H1 (cell line): ENCODE measurements at regions of chr5 and their contacts with region 1.

Region 1: DNA sequence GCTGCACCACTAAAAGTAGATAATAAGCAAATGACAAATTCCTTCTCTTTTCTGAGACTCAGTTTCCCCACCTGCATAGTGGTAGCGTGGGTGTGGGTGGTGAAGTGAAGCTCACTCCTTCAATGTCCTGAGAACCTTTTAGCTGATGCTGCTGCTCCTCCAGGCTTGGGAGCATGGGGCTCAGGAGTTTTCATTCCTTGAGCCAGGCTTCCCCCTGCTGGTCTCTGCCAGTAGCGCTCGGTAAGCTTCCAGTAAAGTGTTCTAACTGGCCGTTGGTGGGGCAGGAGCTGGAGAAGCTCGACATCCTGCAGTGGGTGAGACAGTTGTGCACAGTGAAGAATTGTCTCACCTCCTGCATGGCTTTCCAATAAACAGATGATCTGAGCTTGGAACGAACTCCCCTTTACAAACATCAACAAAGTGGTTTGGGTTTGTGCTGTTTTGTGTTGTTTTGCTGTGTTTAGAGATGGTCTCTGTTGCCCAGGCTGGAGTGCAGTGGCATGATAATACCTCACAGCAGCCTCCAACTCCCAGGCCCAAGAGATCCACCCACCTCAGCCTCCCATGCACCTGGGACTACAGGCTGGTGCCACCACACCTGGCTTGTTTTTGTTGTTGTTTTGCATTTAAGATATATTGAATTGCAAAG is 34.6 kb downstream of the SPARC start:
- DNase-seq: peak; percentile 60 to 87
- H3K4me3 ChIP-seq: no peak overlapping the region
- H3K27ac ChIP-seq: no peak overlapping the region
- H3K4me1 ChIP-seq: no peaks in the 10 kb centered on the region; a peak in 1 of 7 replicates
- H3K27me3 ChIP-seq: no peaks in the 10 kb centered on the region
- CTCF ChIP-seq: peak; percentile 93 to 98 (median 97)
- EP300 ChIP-seq: no peak
- POLR2A ChIP-seq: no peak
- RAD21 ChIP-seq: peak; percentile 99 to 100

Region 2: GRCh38 chr5:151430731-151431130 is 221.4 kb before region 1 on chr5:
- CTCF ChIA-PET with region 1: no interaction called
- POLR2A ChIA-PET with region 1: no interaction called
- DNase-seq: no peak
- H3K4me3 ChIP-seq: no peak overlapping the region
- H3K27ac ChIP-seq: no peak overlapping the region
- H3K4me1 ChIP-seq: peaks cover 0 to 3% (median 0%) of the 10 kb centered on the region in 4 experiments; a peak in 2 of 7 replicates
- H3K27me3 ChIP-seq: no peaks in the 10 kb centered on the region
- CTCF ChIP-seq: no peak
- EP300 ChIP-seq: no peak
- POLR2A ChIP-seq: no peak
- RAD21 ChIP-seq: no peak

Region 3: GRCh38 chr5:151480384-151481293 is 171.5 kb before region 1 on chr5:
- CTCF ChIA-PET with region 1: interaction called, 12 read pairs
- POLR2A ChIA-PET with region 1: no interaction called
- DNase-seq: no peak
- H3K4me3 ChIP-seq: no peak overlapping the region
- H3K27ac ChIP-seq: no peak overlapping the region
- H3K4me1 ChIP-seq: peaks cover 0 to 18% (median 11%) of the 10 kb centered on the region in 4 experiments; a peak in 2 of 7 replicates
- H3K27me3 ChIP-seq: no peaks in the 10 kb centered on the region
- CTCF ChIP-seq: no peak
- EP300 ChIP-seq: no peak
- POLR2A ChIP-seq: no peak
- RAD21 ChIP-seq: no peak

Region 4: DNA sequence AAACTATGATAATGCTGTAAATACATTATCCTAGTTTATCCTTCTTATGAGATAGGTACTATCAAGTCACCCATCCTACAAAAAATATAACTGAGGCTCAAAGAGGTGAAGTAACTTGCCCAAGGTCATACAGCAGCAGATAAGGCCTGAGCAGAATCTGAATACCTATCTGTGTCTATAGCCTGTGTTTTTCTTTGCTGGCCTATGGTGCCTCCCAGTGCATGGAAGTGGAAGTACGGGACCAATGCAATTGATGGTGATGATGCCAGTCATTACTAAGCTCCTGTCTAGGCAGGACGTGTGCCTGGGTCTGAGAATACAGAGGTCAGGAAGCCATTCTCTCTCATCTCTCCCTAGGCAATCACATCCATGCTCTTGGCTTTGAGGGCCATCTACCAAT is 128.8 kb before region 1 on chr5:
- CTCF ChIA-PET with region 1: interaction called, 201 read pairs
- POLR2A ChIA-PET with region 1: no interaction called
- DNase-seq: peak; percentile 15 to 69
- H3K4me3 ChIP-seq: no peak overlapping the region
- H3K27ac ChIP-seq: no peak overlapping the region
- H3K4me1 ChIP-seq: no peaks in the 10 kb centered on the region
- H3K27me3 ChIP-seq: no peaks in the 10 kb centered on the region
- CTCF ChIP-seq: peak; percentile 62 to 94 (median 89)
- EP300 ChIP-seq: no peak
- POLR2A ChIP-seq: no peak
- RAD21 ChIP-seq: peak; percentile 95 to 97

Region 5: GRCh38 chr5:151562019-151562707 is 90.0 kb before region 1 on chr5:
- CTCF ChIA-PET with region 1: interaction called, 30 read pairs
- POLR2A ChIA-PET with region 1: no interaction called
- DNase-seq: no peak
- H3K4me3 ChIP-seq: no peak overlapping the region
- H3K27ac ChIP-seq: no peak overlapping the region
- H3K4me1 ChIP-seq: no peaks in the 10 kb centered on the region
- H3K27me3 ChIP-seq: no peaks in the 10 kb centered on the region; a peak in 1 of 7 replicates
- CTCF ChIP-seq: no peak
- EP300 ChIP-seq: no peak
- POLR2A ChIP-seq: no peak
- RAD21 ChIP-seq: no peak

Region 6: DNA sequence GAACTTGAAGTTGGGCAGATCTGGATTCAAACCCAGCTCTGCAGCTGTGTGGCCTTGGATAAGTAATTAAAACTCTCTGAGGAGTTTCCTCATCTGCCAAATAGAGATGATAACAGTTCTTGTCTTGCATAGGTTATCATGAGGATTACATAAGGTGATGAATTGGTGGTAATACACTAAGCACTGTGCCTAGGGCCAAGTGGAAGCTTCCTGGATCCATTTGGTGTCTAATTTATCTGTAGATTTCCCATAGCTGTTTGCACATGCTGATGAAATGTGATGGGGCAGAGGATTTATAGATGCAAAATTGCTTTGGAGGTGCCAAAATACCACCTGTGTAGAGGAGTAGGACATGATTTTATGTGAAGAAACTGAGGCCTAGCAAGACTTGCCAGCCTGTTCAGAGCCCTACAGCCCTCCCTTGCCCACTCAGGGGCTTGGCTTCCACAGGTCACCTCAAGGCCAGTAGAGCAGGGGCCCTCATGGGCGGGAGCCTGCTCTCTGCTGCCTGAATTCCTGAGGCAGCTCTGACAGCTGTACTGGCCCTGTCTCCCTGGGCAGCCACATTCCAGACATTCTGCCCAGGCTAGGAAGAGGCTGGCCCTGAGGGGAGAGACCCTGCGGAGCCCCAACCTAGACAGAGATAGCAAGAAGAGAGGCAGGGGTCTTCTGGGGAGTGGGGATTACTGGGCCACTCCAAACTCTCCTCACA is 55.1 kb before region 1 on chr5:
- CTCF ChIA-PET with region 1: interaction called, 10 read pairs
- POLR2A ChIA-PET with region 1: no interaction called
- DNase-seq: no peak
- H3K4me3 ChIP-seq: no peak overlapping the region; a peak in 1 of 8 replicates
- H3K27ac ChIP-seq: no peak overlapping the region
- H3K4me1 ChIP-seq: peaks cover 2 to 20% (median 9%) of the 10 kb centered on the region in 4 experiments; a peak in 5 of 7 replicates
- H3K27me3 ChIP-seq: no peaks in the 10 kb centered on the region
- CTCF ChIP-seq: no peak
- EP300 ChIP-seq: no peak
- POLR2A ChIP-seq: no peak
- RAD21 ChIP-seq: no peak

Region 7: GRCh38 chr5:151628112-151628823 is 23.9 kb before region 1 on chr5:
- CTCF ChIA-PET with region 1: interaction called, 32 read pairs
- POLR2A ChIA-PET with region 1: no interaction called
- DNase-seq: no peak
- H3K4me3 ChIP-seq: no peak overlapping the region
- H3K27ac ChIP-seq: no peak overlapping the region
- H3K4me1 ChIP-seq: peaks cover 0 to 4% (median under 1%) of the 10 kb centered on the region in 4 experiments; a peak in 2 of 7 replicates
- H3K27me3 ChIP-seq: no peaks in the 10 kb centered on the region
- CTCF ChIP-seq: no peak
- EP300 ChIP-seq: no peak
- POLR2A ChIP-seq: no peak
- RAD21 ChIP-seq: no peak

Region 8: DNA sequence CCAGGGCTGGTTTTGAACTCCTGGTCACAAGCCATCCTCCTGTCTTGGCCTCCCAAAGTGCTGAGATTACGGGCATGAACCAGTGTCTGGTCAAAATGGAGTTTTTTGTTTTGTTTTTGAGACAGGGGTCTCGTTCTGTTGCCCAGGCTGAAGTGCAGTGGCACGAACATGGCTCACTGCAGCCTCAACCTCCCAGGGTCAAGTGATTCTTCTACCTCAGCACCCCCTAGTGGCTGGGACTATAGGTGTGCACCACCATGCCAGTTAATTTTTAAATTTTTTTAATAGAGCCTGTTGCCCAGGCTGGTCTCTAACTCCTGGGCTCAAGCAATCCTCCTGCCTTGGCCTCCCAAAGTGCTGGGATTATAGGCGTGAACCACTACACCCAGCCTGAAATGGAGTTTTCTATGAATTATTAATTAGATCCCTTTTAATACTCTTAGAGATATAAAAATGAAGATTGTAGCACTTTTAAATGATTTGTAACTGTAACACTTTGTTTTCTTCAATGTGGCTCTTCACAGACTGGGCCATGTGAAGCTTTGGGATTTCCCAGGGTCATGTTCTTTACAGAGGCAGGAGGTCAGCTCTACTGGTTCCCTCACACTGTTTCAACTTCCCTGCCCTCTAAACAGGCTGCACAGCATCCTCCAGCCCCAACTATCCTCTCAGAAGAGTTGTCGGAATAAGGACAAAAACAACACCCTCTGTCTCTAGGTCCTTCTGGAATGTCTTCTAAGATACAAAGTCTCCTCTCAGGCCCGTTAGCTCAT is 67.3 kb after region 1 on chr5:
- CTCF ChIA-PET with region 1: interaction called, 59 read pairs
- POLR2A ChIA-PET with region 1: no interaction called
- DNase-seq: peak in 1 of 2 experiments; percentile 67
- H3K4me3 ChIP-seq: no peak overlapping the region
- H3K27ac ChIP-seq: no peak overlapping the region
- H3K4me1 ChIP-seq: peaks cover 0 to 10% (median 6%) of the 10 kb centered on the region in 4 experiments; a peak in 4 of 7 replicates
- H3K27me3 ChIP-seq: no peaks in the 10 kb centered on the region
- CTCF ChIP-seq: peak; percentile 54 to 56 (median 55)
- EP300 ChIP-seq: no peak
- POLR2A ChIP-seq: no peak
- RAD21 ChIP-seq: peak; percentile 65 to 73

Region 9: GRCh38 chr5:151799407-151799806 is 147.3 kb after region 1 on chr5:
- CTCF ChIA-PET with region 1: no interaction called
- POLR2A ChIA-PET with region 1: no interaction called
- DNase-seq: no peak
- H3K4me3 ChIP-seq: no peak overlapping the region
- H3K27ac ChIP-seq: no peak overlapping the region
- H3K4me1 ChIP-seq: no peaks in the 10 kb centered on the region
- H3K27me3 ChIP-seq: no peaks in the 10 kb centered on the region
- CTCF ChIP-seq: no peak
- EP300 ChIP-seq: no peak
- POLR2A ChIP-seq: no peak
- RAD21 ChIP-seq: no peak